ENCODE measurements at regions of chr10 and their contacts with region 1.

Region 1: GRCh38 chr10:62437696-62438095 is 63.5 kb downstream of the ZNF365 start:
- DNase-seq: no peak
- H3K4me3 ChIP-seq: no peak overlapping the region
- H3K27ac ChIP-seq: peak overlapping the region in 2 of 59 donors; percentile 44 to 51
- H3K27me3 ChIP-seq: no peaks in the 10 kb centered on the region
- CTCF ChIP-seq: peak; percentile 63 to 96 (median 86)

Region 2: DNA sequence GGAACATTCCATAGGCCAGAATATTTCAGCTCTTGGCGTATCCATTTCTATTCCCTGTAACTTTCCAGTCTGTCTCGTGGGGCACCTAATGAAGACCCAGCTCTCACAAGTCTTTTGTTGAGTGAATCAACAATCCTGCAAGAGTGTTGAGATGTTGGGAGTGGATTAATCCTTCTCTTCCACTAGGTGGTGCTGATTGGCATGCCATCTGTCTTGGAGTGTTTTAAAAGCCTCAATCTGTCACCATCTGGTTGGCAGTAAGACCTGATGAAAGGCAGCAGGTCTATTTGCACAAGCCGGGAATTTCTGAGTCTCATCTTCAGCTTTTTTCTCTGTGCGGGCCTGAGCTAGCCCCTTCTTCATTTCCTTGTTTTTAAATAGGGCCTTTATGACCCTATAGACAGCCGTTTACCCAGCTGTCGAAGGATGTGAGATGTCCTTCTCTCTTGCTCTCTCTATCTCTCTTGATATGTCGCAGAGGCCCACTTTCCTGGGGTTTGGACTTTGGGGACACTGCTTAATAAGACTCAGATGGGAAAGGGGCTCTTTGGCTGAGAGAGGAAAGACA is 117.0 kb after region 1 on chr10:
- intact Hi-C with region 1: loop called in 1 of 2 experiments (anchors 10 kb)
- DNase-seq: no peak
- H3K4me3 ChIP-seq: no peak overlapping the region
- H3K27ac ChIP-seq: no peak overlapping the region
- H3K27me3 ChIP-seq: no peaks in the 10 kb centered on the region
- CTCF ChIP-seq: peak; percentile 28 to 75 (median 57)

Region 3: DNA sequence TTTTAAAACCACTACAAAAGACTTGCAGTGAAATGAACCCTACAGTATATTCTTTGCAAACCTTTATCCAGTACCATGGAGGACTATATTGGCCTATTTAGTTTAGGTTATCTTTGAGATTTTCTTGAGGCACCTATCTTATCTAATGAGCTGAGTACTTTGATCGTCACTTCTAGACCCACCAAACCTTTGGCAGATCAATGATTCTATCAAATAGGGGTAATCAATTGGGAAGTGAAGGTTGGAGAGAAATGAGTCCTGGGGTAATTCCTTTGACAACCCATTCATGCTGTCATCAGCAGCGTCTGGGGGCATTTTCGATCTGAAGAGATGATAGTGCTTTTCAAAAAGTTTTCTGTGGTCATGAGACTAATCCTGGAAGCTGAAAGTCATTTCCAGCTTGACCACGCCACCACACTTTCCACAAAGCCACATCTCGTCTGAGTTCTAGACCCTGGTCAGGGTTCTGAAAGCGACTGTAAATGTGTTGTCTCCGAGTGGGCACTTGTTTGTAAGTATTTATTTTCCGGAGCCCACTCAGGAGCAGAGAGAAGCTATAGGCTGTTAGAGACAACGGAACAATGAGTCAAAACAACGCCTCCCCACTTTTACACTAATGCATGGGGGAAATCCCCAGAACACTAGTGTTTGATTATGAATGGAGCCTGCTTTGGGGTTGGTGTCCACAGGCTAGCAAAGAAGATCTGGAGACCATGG is 373.6 kb after region 1 on chr10:
- intact Hi-C with region 1: loop called (anchors 5 kb)
- DNase-seq: no peak
- H3K4me3 ChIP-seq: no peak overlapping the region
- H3K27ac ChIP-seq: no peak overlapping the region
- H3K27me3 ChIP-seq: peaks cover 0 to 24% (median 12%) of the 10 kb centered on the region in 45 donors
- CTCF ChIP-seq: no peak

Region 4: GRCh38 chr10:63083904-63084689 is 646.4 kb after region 1 on chr10:
- intact Hi-C with region 1: loop called in 1 of 2 experiments (anchors 5 kb)
- DNase-seq: peak in 7 of 10 donors; percentile 6 to 77 (median 55)
- H3K4me3 ChIP-seq: no peak overlapping the region
- H3K27ac ChIP-seq: no peak overlapping the region
- H3K27me3 ChIP-seq: no peaks in the 10 kb centered on the region
- CTCF ChIP-seq: peak; percentile 22 to 93 (median 78)

Region 5: GRCh38 chr10:63157845-63158624 is 720.3 kb after region 1 on chr10:
- intact Hi-C with region 1: loop called in 1 of 2 experiments (anchors 5 kb)
- DNase-seq: peak in 1 of 10 donors; percentile 32
- H3K4me3 ChIP-seq: no peak overlapping the region
- H3K27ac ChIP-seq: no peak overlapping the region
- H3K27me3 ChIP-seq: no peaks in the 10 kb centered on the region
- CTCF ChIP-seq: peak; percentile 69 to 96 (median 88)